ENCODE measurements at regions of chr14 and their contacts with region 1.

Region 1: DNA sequence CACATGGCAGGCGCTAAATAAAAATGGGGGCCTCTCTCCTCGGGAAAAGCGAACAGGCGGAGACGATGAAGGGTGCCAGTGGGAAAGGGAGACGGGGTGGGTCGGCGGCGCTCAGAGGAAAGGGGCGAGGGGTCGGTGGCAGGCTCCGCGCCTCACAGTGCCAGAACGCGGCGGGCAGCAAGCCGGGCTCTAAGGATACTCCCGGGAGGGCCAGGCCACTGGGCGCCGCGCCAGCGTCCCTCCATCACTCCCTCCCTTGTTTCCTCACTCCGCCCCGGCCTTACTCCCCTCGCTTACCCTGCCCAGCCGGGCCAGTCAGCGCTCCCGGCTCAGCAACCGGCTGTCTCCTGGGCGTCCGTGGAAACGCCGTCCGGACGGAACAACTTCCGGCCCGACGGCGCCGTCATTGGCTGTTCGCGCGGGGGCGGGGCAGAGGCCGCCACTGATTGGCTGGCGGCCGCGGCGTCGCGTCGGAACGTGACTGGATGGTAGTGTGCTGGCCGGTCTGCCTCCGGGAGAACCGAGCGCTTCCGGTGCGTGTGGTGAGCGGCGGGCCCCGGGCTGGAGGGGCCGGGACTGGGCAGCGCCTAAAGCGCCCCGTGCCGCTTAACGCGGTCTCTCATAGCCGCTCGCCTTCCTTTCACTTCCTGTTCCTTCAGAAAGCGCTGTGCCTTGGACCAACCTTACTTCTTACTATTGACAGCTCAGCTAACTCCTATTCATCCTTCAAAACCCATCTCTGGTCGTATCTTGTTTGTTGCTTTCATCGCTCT is 53.0 kb downstream of the SLC25A47 start:
- DNase-seq: peak; percentile 98
- H3K4me3 ChIP-seq: peak within 1 kb of the TSS; percentile 62 to 94 (median 64)
- H3K27ac ChIP-seq: peak within 1 kb of the TSS; percentile 88
- H3K4me1 ChIP-seq: peaks cover 29% of the 10 kb centered on the region
- H3K27me3 ChIP-seq: no peaks in the 10 kb centered on the region
- CTCF ChIP-seq: no peak
- POLR2A ChIP-seq: peak; percentile 58

Region 2: DNA sequence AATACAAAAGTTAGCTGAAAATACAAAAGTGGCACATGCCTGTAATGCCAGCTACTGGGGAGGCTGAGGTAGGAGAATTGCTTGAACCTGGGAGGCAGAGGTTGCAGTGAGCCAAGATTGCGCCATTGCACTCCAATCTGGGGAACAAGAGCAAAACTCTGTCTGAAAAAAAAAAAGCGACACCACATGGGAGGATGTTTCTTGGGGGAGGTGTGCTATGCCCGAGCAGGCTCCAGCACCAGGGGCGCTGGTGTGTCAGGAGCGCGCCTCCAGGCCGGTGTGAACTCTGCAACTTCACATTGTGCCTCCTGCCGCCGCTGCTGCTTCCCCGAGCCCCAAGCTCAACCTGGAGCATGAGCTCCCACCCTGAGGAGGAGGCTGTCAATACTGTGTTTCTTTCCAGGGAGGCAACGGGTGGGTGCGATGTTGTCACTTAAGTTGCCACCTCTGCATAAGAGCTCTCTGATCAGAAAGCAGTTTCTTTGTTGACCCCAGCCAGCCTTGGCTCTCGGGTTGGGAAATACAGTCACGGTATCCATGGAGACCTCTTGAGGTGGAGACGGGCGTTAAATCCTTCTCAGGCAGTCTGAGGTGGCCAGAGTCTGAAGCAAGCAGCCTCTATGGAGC is 235.6 kb before region 1 on chr14:
- CTCF ChIA-PET with region 1: no interaction called
- POLR2A ChIA-PET with region 1: no interaction called
- dilution Hi-C with region 1: no loop called
- intact Hi-C with region 1: loop called (anchors 2 kb)
- DNase-seq: peak; percentile 81
- H3K4me3 ChIP-seq: no peak overlapping the region
- H3K27ac ChIP-seq: peak overlapping the region; percentile 83
- H3K4me1 ChIP-seq: peaks cover 31% of the 10 kb centered on the region
- H3K27me3 ChIP-seq: no peaks in the 10 kb centered on the region
- CTCF ChIP-seq: peak; percentile 57 to 84
- POLR2A ChIP-seq: no peak

Region 3: GRCh38 chr14:100285021-100285912 is 90.9 kb before region 1 on chr14:
- CTCF ChIA-PET with region 1: interaction called, 7 read pairs
- POLR2A ChIA-PET with region 1: no interaction called
- dilution Hi-C with region 1: no loop called
- intact Hi-C with region 1: loop called (anchors 1 kb)
- DNase-seq: peak; percentile 60
- H3K4me3 ChIP-seq: peak overlapping the region; percentile 27 to 88 (median 45)
- H3K27ac ChIP-seq: peak overlapping the region; percentile 67
- H3K4me1 ChIP-seq: peaks cover 2% of the 10 kb centered on the region
- H3K27me3 ChIP-seq: no peaks in the 10 kb centered on the region
- CTCF ChIP-seq: peak; percentile 60 to 93
- POLR2A ChIP-seq: peak; percentile 10

Region 4: DNA sequence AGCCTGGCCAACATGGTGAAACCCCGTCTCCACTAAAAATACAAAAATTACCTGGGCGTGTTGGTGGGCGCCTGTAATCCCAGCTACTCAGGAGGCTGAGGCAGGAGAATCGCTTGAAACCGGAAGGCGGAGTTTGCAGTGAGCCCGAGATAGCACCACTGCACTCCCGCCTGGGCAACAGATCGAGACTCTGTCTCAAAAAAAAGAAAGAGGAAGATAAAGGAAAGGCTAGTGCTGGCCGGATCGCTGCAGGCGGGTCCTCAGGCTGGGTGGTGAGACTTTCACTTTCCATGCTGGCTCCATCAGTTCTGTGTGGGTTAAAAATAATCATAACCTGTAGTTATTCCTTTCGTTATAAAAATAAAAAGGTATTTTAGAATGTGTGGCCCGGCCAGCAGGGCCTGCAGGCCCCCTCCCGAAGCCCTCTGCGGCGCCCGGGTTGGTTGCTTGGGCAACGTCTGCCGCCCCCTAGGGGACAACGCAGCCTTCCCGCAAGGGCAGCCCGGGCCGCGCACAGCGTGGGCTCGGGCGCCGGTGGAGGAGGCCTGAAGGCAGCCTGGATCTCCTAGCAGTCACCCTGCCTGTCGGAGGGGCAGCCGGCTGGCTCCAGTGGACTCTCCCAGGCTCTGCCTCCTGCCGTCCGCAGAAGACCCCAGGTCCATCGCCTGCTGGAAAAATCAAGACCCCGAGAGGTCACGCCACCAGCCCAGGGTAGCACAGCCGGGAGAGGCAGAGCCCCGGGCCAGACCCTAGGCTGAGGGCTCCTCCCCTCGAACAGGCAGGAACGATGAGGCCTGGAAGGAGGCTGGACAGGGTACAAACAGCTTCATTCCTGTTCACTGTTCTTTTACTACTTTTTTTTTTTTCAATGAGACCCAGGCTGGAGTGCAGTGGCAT is 58.0 kb before region 1 on chr14:
- CTCF ChIA-PET with region 1: no interaction called
- POLR2A ChIA-PET with region 1: no interaction called
- dilution Hi-C with region 1: no loop called
- intact Hi-C with region 1: loop called (anchors 1 kb)
- DNase-seq: peak; percentile 70
- H3K4me3 ChIP-seq: no peak overlapping the region
- H3K27ac ChIP-seq: no peak overlapping the region
- H3K4me1 ChIP-seq: no peaks in the 10 kb centered on the region
- H3K27me3 ChIP-seq: no peaks in the 10 kb centered on the region
- CTCF ChIP-seq: peak; percentile 95 to 96
- POLR2A ChIP-seq: no peak

Region 5: DNA sequence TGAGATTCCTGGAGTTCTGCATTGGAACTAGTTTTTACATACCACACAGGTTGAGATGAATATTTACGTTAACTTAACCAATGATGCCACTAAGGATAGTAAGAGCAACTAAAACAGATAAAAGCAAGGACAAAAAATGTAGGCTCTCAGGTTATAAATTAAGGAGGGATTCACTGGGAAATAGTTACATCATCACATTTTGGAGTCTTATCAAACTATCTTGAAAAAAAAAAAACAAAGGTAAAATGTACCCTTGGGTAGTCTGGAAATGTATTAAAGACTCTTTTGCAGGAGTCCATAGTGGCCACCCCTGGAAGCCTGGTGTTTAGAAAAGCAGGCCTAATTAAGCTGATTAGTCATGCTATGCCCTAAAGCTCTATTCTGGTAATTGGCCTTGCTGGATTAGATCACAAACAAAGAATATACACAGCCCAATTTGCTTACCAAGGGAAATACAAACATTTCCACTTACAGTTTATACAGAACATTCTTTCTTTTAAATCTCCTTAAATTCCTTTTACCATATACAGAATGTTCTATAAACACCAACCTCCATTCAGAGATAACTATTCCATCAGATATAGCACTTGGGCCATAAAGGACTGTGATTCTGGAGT is 13.7 kb before region 1 on chr14:
- CTCF ChIA-PET with region 1: interaction called, 14 read pairs
- POLR2A ChIA-PET with region 1: interaction called, 18 read pairs
- dilution Hi-C with region 1: no loop called
- intact Hi-C with region 1: loop called (anchors 1 kb)
- DNase-seq: no peak
- H3K4me3 ChIP-seq: no peak overlapping the region
- H3K27ac ChIP-seq: no peak overlapping the region
- H3K4me1 ChIP-seq: peaks cover 33% of the 10 kb centered on the region
- H3K27me3 ChIP-seq: no peaks in the 10 kb centered on the region
- CTCF ChIP-seq: no peak
- POLR2A ChIP-seq: no peak

Region 6: DNA sequence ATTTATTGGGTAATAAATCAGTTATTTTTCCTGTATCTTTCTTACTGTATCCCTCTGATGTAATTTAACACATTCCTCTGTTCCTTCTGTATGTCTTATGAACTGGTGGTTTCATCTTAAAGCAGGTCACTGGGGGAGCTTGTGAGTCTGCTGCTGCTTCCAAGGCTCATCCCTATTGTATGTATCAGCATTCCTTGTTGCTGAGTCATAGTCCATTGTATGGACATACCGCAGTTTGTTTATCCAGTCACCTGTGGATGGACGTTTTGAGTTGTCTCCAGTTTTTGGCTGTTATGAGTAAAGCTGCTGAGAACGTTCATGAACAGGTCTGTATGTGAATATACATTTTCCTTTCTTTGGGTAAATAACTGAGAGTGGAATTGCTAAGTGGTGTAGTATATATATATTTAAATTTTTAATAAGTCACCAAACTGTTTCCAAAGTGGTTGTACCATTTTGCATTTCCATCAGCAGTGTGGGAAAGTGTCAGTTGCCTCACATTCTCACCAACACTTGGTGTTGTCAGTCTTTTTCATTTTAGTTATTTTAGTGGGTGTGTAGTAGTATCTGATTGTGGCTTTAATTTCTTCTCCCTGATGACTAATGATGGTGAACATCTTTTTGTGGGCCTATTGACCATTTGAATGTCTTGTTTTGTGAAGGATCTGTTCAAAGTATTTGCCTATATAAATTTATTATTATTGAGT is 128.4 kb after region 1 on chr14:
- CTCF ChIA-PET with region 1: no interaction called
- POLR2A ChIA-PET with region 1: no interaction called
- dilution Hi-C with region 1: no loop called
- intact Hi-C with region 1: no loop called
- DNase-seq: no peak
- H3K4me3 ChIP-seq: no peak overlapping the region
- H3K27ac ChIP-seq: no peak overlapping the region
- H3K4me1 ChIP-seq: no peaks in the 10 kb centered on the region
- H3K27me3 ChIP-seq: no peaks in the 10 kb centered on the region
- CTCF ChIP-seq: no peak
- POLR2A ChIP-seq: no peak

Region 7: GRCh38 chr14:100524933-100525243 is 148.7 kb after region 1 on chr14:
- CTCF ChIA-PET with region 1: no interaction called
- POLR2A ChIA-PET with region 1: no interaction called
- dilution Hi-C with region 1: no loop called
- intact Hi-C with region 1: no loop called
- DNase-seq: no peak
- H3K4me3 ChIP-seq: no peak overlapping the region
- H3K27ac ChIP-seq: no peak overlapping the region
- H3K4me1 ChIP-seq: no peaks in the 10 kb centered on the region
- H3K27me3 ChIP-seq: no peaks in the 10 kb centered on the region
- CTCF ChIP-seq: peak; percentile 13 to 41
- POLR2A ChIP-seq: no peak

Region 8: GRCh38 chr14:100618318-100618693 is 242.2 kb after region 1 on chr14:
- CTCF ChIA-PET with region 1: no interaction called
- POLR2A ChIA-PET with region 1: no interaction called
- dilution Hi-C with region 1: no loop called
- intact Hi-C with region 1: no loop called
- DNase-seq: no peak
- H3K4me3 ChIP-seq: no peak overlapping the region
- H3K27ac ChIP-seq: no peak overlapping the region
- H3K4me1 ChIP-seq: no peaks in the 10 kb centered on the region
- H3K27me3 ChIP-seq: peaks cover 14 to 18% of the 10 kb centered on the region in 2 experiments
- CTCF ChIP-seq: no peak
- POLR2A ChIP-seq: no peak

Measured in endothelial cell of umbilical vein (primary cell).